Activated CD8-positive, alpha-beta T cell treated with anti-CD3 and anti-CD28 coated beads for 36 hours (primary cell): ENCODE measurements at regions of chr17 and their contacts with region 1.

Region 1: DNA sequence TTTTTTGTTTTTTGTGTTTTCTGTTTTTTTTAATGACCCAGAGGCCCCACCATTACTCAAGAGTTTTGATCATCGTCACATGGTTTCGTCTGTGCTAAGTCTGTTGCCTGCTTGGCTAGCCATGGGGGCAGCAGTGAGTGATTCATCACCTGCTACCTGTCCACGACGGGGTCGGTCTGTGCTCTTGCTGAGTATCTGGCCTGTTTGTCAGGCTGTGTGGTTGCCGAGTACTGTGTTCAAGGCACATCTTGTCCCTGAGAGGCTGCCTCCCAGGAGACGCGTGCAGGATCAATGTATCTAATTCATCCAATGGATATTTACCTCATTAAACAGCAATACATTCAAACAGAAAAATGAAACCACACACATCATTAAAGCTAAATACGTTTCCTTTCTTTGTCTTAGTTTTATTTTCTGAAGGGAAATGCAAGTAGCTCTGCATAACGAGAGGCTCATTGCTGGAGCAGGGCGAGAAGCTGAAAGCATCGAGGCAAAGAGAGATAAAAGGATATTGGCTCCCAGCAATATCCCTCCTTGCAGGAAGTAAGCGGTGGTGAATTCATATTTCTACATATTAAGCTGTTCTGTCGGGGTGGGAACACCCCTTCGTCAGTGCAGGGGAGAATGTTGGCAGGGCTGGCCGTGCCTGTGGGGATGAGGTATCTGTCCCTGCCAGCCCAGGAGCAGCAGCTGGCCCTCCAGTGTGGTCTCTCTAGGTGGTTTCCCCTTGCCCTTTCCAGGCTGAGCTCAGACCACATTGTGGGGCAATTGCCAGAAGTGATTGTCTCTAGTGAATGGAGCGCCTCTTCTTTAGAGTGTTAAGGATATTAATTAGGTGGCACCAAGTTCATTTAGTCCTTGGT is 166.2 kb upstream of the ASIC2 start:
- DNase-seq: no peak
- ATAC-seq: no peak
- H3K4me3 Mint-ChIP-seq: no peak overlapping the region
- H3K27ac Mint-ChIP-seq: no peak overlapping the region
- H3K4me1 Mint-ChIP-seq: no peaks in the 10 kb centered on the region
- H3K27me3 Mint-ChIP-seq: peaks cover 12% of the 10 kb centered on the region
- CTCF ChIP-seq: no peak

Region 2: GRCh38 chr17:33511670-33512069 is 52.4 kb after region 1 on chr17:
- CTCF ChIA-PET with region 1: no interaction called
- POLR2A ChIA-PET with region 1: no interaction called
- intact Hi-C with region 1: loop called (anchors 10 kb)
- DNase-seq: peak; percentile 10
- ATAC-seq: no peak
- H3K4me3 Mint-ChIP-seq: no peak overlapping the region
- H3K27ac Mint-ChIP-seq: no peak overlapping the region
- H3K4me1 Mint-ChIP-seq: peaks cover 7% of the 10 kb centered on the region
- H3K27me3 Mint-ChIP-seq: peaks cover 11% of the 10 kb centered on the region
- CTCF ChIP-seq: no peak